ENCODE measurements at regions of chr20 and their contacts with region 1.

Region 1: GRCh38 chr20:50575847-50576720 is 65.9 kb downstream of the PTPN1 start:
- DNase-seq: peak; percentile 68
- ATAC-seq: peak; percentile 93
- H3K4me3 ChIP-seq: no peak overlapping the region
- H3K27ac ChIP-seq: no peak overlapping the region
- H3K4me1 ChIP-seq: no peaks in the 10 kb centered on the region
- H3K27me3 ChIP-seq: no peaks in the 10 kb centered on the region
- CTCF ChIP-seq: peak; percentile 93

Region 2: DNA sequence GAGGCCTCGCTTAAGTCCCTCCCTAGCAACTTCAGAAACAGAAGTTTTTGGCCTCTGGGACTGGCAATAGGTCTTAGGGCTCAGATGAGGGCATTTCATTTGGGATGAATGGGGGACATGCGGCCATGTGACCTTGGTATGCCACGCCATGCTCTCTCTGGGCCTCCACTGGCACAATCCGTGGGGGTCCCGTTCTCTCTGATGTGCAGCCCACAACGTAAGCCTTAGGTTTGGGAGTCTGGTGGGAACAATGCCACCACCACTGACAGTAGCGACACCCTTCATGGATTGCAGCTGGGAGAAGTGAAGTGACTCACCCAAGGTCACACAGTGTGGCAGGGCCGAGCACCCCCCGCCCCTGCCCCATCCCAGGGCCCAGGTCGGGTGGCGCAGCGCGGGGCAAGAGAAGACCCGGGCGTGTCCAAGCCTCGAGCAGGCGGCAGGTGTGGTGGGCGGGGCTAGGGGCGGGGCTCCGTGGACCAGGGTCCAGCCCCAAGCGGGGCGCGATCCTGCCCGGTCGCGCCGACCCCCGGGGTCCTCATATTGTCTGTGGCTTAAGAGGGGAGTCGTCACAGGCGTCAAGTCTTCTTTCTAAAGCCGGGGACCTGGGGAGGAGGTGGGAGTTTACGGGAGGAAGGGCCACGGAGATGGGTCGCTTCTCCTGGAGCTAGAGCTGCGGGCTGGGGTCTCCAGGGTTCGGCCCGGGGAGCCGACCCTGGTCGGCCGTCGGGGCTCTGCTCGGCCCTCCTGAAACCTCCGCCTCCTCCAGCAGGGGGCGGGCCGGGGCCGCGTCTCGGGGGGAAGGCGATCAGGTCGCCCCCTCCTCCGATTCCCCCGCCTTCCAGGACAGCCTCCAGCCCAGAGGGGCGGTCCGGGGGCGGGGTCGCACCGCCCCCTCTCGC is 386.2 kb before region 1 on chr20:
- CTCF ChIA-PET with region 1: no interaction called
- POLR2A ChIA-PET with region 1: interaction called, 7 read pairs
- intact Hi-C with region 1: loop called (anchors 1 kb)
- DNase-seq: peak; percentile 92
- ATAC-seq: peak; percentile 39
- H3K4me3 ChIP-seq: peak overlapping the region; percentile 96
- H3K27ac ChIP-seq: peak overlapping the region; percentile 75; the same call in 1 of the 2 replicates
- H3K4me1 ChIP-seq: peaks cover 28% of the 10 kb centered on the region
- H3K27me3 ChIP-seq: no peaks in the 10 kb centered on the region
- CTCF ChIP-seq: peak; percentile 72

Region 3: DNA sequence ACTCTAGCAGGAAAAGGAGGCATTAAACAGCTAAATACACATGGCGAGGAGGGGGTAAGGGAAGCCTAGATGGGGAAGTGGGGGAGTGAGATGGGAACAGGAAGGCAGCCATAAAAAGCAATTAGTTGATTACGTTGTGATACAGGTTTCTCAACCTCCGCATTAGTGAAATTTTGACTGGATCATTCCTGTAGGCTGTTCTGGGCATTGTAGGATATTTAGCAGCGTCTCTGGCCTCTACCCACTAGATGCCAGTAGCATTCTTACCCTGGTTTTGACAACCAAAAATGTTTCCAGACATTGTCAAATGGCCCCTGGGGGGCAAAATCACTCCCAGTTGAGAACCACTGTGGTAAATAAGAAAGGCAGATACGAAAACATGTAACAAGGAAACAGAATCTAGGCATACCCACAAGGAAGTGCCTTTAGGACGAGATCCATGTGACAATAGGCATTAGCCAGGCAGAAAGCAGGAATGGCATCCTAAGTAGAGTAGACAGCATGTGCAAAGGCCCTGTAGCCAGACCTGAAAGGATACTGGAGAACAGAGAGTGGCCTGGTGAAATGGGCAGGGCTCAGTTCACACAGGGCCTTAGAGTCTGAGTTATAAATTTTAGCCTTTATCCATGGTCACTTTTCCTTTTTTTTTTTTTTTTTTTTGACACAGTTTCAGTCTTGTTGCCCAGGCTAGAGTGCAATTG is 91.7 kb before region 1 on chr20:
- CTCF ChIA-PET with region 1: interaction called, 4 read pairs
- POLR2A ChIA-PET with region 1: no interaction called
- intact Hi-C with region 1: loop called (anchors 5 kb)
- DNase-seq: no peak
- ATAC-seq: no peak; the same call in 1 of the 2 replicates
- H3K4me3 ChIP-seq: peak overlapping the region; percentile 68
- H3K27ac ChIP-seq: peak overlapping the region; percentile 44
- H3K4me1 ChIP-seq: peaks cover 11% of the 10 kb centered on the region
- H3K27me3 ChIP-seq: no peaks in the 10 kb centered on the region
- CTCF ChIP-seq: peak; percentile 34

Region 4: GRCh38 chr20:50504231-50504823 is 71.8 kb before region 1 on chr20:
- CTCF ChIA-PET with region 1: interaction called, 7 read pairs
- POLR2A ChIA-PET with region 1: no interaction called
- intact Hi-C with region 1: loop called (anchors 1 kb)
- DNase-seq: no peak
- ATAC-seq: peak; percentile 73
- H3K4me3 ChIP-seq: no peak overlapping the region
- H3K27ac ChIP-seq: no peak overlapping the region
- H3K4me1 ChIP-seq: peaks cover under 1% of the 10 kb centered on the region
- H3K27me3 ChIP-seq: no peaks in the 10 kb centered on the region
- CTCF ChIP-seq: peak; percentile 39; the same call in 1 of the 2 replicates

Region 5: DNA sequence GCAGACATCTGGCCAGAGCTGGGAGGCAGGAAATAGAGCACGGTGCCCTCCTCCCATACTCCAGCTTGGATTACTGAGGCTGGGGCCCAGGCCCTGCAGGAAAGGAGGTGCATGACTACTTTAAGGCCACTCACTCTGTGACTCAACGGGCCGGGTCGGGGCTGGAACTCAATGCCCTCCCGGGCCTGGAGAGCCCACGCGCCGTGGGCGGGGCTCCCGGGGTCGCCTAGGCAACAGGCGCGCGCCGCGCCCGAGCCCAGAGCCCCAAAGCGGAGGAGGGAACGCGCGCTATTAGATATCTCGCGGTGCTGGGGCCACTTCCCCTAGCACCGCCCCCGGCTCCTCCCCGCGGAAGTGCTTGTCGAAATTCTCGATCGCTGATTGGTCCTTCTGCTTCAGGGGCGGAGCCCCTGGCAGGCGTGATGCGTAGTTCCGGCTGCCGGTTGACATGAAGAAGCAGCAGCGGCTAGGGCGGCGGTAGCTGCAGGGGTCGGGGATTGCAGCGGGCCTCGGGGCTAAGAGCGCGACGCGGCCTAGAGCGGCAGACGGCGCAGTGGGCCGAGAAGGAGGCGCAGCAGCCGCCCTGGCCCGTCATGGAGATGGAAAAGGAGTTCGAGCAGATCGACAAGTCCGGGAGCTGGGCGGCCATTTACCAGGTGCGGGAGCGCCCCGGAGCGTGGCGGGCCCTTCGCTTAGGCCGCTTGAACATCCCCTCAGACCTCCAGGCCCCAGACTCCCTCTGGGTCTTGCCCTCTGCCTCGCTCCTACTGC is 66.0 kb before region 1 on chr20 and contains the start of gene PTPN1:
- CTCF ChIA-PET with region 1: no interaction called
- POLR2A ChIA-PET with region 1: no interaction called
- intact Hi-C with region 1: loop called (anchors 2 kb)
- DNase-seq: peak; percentile 100
- ATAC-seq: peak; percentile 96
- H3K4me3 ChIP-seq: peak within 1 kb of the TSS; percentile 83
- H3K27ac ChIP-seq: peak within 1 kb of the TSS; percentile 38
- H3K4me1 ChIP-seq: peaks cover 37% of the 10 kb centered on the region
- H3K27me3 ChIP-seq: no peaks in the 10 kb centered on the region
- CTCF ChIP-seq: no peak
- total RNA-seq, gene PTPN1: 47.2 and 47.7 TPM in 2 replicates

Region 6: GRCh38 chr20:50680412-50680908 is 104.4 kb after region 1 on chr20:
- CTCF ChIA-PET with region 1: no interaction called
- POLR2A ChIA-PET with region 1: no interaction called
- intact Hi-C with region 1: no loop called
- DNase-seq: no peak
- ATAC-seq: no peak
- H3K4me3 ChIP-seq: no peak overlapping the region
- H3K27ac ChIP-seq: no peak overlapping the region
- H3K4me1 ChIP-seq: peaks cover 6% of the 10 kb centered on the region; the same call in 1 of the 2 replicates
- H3K27me3 ChIP-seq: no peaks in the 10 kb centered on the region
- CTCF ChIP-seq: no peak

Measured in PC-3 (cell line).